PC-9 (cell line): ENCODE measurements at regions of chr4 and their contacts with region 1.

Region 1: DNA sequence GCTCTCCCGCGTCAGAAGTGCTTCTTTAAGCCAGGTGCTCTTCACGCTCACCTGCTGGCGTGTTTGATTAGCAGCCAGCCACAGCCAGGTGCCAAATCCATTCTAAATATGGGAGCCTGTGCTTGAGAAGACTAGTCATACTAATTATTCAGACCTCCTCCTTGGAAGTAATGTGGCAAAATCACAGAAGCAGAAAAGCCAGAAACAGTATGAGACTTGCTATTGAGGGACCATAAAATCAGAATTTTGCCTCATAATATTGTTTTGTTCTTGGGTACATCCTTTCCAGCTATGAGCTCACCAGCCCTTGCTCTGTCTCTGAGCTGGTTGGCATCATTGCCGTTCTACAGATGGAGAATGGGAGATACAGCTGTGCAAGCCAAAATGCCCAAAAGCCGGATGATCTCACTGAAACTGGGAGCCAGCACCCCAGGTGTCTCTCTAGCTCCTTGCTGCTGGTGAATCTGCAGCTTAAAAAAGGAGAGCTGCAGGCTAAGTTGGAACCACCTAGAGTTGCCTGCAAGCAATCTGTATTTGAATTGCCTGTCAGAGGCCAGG is 205.4 kb downstream of the SHROOM3 start:
- DNase-seq: peak in 1 of 2 experiments; percentile 41
- H3K4me3 ChIP-seq: no peak overlapping the region; the same call in 1 of the 2 replicates
- H3K27ac ChIP-seq: no peak overlapping the region
- H3K4me1 ChIP-seq: peaks cover 61% of the 10 kb centered on the region
- H3K27me3 ChIP-seq: no peaks in the 10 kb centered on the region
- CTCF ChIP-seq: no peak

Region 2: GRCh38 chr4:76511947-76512346 is 128.5 kb before region 1 on chr4:
- CTCF ChIA-PET with region 1: interaction called, 7 read pairs
- POLR2A ChIA-PET with region 1: no interaction called
- intact Hi-C with region 1: loop called (anchors 5 kb)
- DNase-seq: no peak
- H3K4me3 ChIP-seq: no peak overlapping the region
- H3K27ac ChIP-seq: no peak overlapping the region
- H3K4me1 ChIP-seq: no peaks in the 10 kb centered on the region
- H3K27me3 ChIP-seq: no peaks in the 10 kb centered on the region
- CTCF ChIP-seq: no peak

Region 3: DNA sequence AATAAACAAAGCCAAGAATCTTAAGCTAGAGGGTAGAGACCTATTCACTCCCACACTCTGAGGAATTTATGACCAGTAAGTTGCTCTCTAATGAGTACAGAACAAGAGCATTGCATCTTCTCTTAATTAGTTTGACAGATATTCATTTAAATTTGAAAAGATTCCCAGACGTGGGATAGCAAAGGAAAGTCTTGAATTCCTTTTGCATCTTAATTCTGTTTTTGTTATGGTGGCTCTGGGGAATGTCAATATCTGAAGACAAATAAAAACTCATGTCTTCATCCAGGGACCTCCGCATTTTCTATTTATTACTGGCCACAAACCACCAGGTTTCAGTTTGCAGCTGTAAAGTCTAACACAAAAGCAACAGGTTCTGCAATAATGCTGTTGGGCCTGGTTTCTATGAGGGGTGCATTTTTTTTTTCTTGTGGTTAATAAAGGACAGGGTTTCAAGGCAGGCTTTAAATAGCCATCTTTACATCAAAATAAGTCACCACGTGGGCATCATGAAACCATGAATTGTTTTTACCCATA is 33.1 kb before region 1 on chr4:
- CTCF ChIA-PET with region 1: no interaction called
- POLR2A ChIA-PET with region 1: no interaction called
- intact Hi-C with region 1: no loop called
- DNase-seq: no peak
- H3K4me3 ChIP-seq: no peak overlapping the region
- H3K27ac ChIP-seq: no peak overlapping the region
- H3K4me1 ChIP-seq: no peaks in the 10 kb centered on the region
- H3K27me3 ChIP-seq: no peaks in the 10 kb centered on the region
- CTCF ChIP-seq: no peak

Region 4: GRCh38 chr4:76665139-76665538 is 24.7 kb after region 1 on chr4:
- CTCF ChIA-PET with region 1: no interaction called
- POLR2A ChIA-PET with region 1: no interaction called
- intact Hi-C with region 1: loop called (anchors 1 kb)
- DNase-seq: peak; percentile 81 to 92
- H3K4me3 ChIP-seq: no peak overlapping the region
- H3K27ac ChIP-seq: peak overlapping the region; percentile 80
- H3K4me1 ChIP-seq: peaks cover 29% of the 10 kb centered on the region
- H3K27me3 ChIP-seq: no peaks in the 10 kb centered on the region
- CTCF ChIP-seq: no peak

Region 5: GRCh38 chr4:76689241-76689817 is 48.9 kb after region 1 on chr4:
- CTCF ChIA-PET with region 1: no interaction called
- POLR2A ChIA-PET with region 1: interaction called, 10 read pairs
- intact Hi-C with region 1: no loop called
- DNase-seq: peak; percentile 68
- H3K4me3 ChIP-seq: peak overlapping the region; percentile 92
- H3K27ac ChIP-seq: peak overlapping the region; percentile 78
- H3K4me1 ChIP-seq: peaks cover 43% of the 10 kb centered on the region
- H3K27me3 ChIP-seq: no peaks in the 10 kb centered on the region
- CTCF ChIP-seq: no peak